B cell (primary cell): ENCODE measurements at regions of chr21 and their contacts with region 1.

Region 1: GRCh38 chr21:17819114-17819876 is at the start of gene C21orf91:
- DNase-seq: peak; percentile 95
- ATAC-seq: peak; percentile 84
- H3K4me3 ChIP-seq: peak within 1 kb of the TSS; percentile 84 to 93 (median 92)
- H3K4me3 Mint-ChIP-seq: peak within 1 kb of the TSS; percentile 99
- H3K27ac ChIP-seq: peak within 1 kb of the TSS; percentile 86 to 96
- H3K27ac Mint-ChIP-seq: peak within 1 kb of the TSS; percentile 100
- H3K4me1 ChIP-seq: peaks cover 24 to 26% of the 10 kb centered on the region in 2 donors
- H3K4me1 Mint-ChIP-seq: peaks cover 36% of the 10 kb centered on the region
- H3K27me3 ChIP-seq: no peaks in the 10 kb centered on the region
- H3K27me3 Mint-ChIP-seq: no peaks in the 10 kb centered on the region
- CTCF ChIP-seq: no peak
- total RNA-seq, gene C21orf91: 31.1 and 32.3 TPM in 2 replicates

Region 2: GRCh38 chr21:17611414-17612022 is 207.8 kb before region 1 on chr21:
- CTCF ChIA-PET with region 1: no interaction called
- POLR2A ChIA-PET with region 1: no interaction called
- intact Hi-C with region 1: loop called (anchors 1 kb)
- DNase-seq: peak; percentile 87
- ATAC-seq: peak; percentile 42
- H3K4me3 ChIP-seq: peak overlapping the region; percentile 75 to 89 (median 79)
- H3K4me3 Mint-ChIP-seq: peak overlapping the region; percentile 97
- H3K27ac ChIP-seq: peak overlapping the region; percentile 3 to 62
- H3K27ac Mint-ChIP-seq: peak overlapping the region; percentile 96
- H3K4me1 ChIP-seq: peaks cover 8 to 10% of the 10 kb centered on the region in 2 donors
- H3K4me1 Mint-ChIP-seq: peaks cover 18% of the 10 kb centered on the region
- H3K27me3 ChIP-seq: no peaks in the 10 kb centered on the region
- H3K27me3 Mint-ChIP-seq: no peaks in the 10 kb centered on the region
- CTCF ChIP-seq: no peak

Region 3: GRCh38 chr21:17679002-17679600 is 140.2 kb before region 1 on chr21:
- CTCF ChIA-PET with region 1: interaction called, 3 read pairs
- POLR2A ChIA-PET with region 1: no interaction called
- intact Hi-C with region 1: loop called (anchors 2 kb)
- DNase-seq: peak; percentile 71
- ATAC-seq: peak; percentile 78
- H3K4me3 ChIP-seq: no peak overlapping the region
- H3K4me3 Mint-ChIP-seq: no peak overlapping the region
- H3K27ac ChIP-seq: no peak overlapping the region
- H3K27ac Mint-ChIP-seq: no peak overlapping the region
- H3K4me1 ChIP-seq: no peaks in the 10 kb centered on the region
- H3K4me1 Mint-ChIP-seq: no peaks in the 10 kb centered on the region
- H3K27me3 ChIP-seq: no peaks in the 10 kb centered on the region
- H3K27me3 Mint-ChIP-seq: no peaks in the 10 kb centered on the region
- CTCF ChIP-seq: peak; percentile 92

Region 4: GRCh38 chr21:17688912-17689874 is 130.1 kb before region 1 on chr21:
- CTCF ChIA-PET with region 1: interaction called, 11 read pairs
- POLR2A ChIA-PET with region 1: no interaction called
- intact Hi-C with region 1: no loop called
- DNase-seq: peak; percentile 30
- ATAC-seq: no peak
- H3K4me3 ChIP-seq: no peak overlapping the region
- H3K4me3 Mint-ChIP-seq: no peak overlapping the region
- H3K27ac ChIP-seq: no peak overlapping the region
- H3K27ac Mint-ChIP-seq: no peak overlapping the region
- H3K4me1 ChIP-seq: peaks cover 2 to 3% of the 10 kb centered on the region in 2 donors
- H3K4me1 Mint-ChIP-seq: peaks cover 6% of the 10 kb centered on the region
- H3K27me3 ChIP-seq: peaks cover 0 to 3% (median 0%) of the 10 kb centered on the region in 4 experiments
- H3K27me3 Mint-ChIP-seq: peaks cover 6% of the 10 kb centered on the region
- CTCF ChIP-seq: peak; percentile 49

Region 5: GRCh38 chr21:17780539-17780938 is 38.8 kb before region 1 on chr21:
- CTCF ChIA-PET with region 1: interaction called, 8 read pairs
- POLR2A ChIA-PET with region 1: interaction called, 14 read pairs
- intact Hi-C with region 1: loop called (anchors 1 kb)
- DNase-seq: peak; percentile 66
- ATAC-seq: peak; percentile 26
- H3K4me3 ChIP-seq: peak overlapping the region in 1 of 5 experiments; percentile 3
- H3K4me3 Mint-ChIP-seq: peak overlapping the region; percentile 58
- H3K27ac ChIP-seq: no peak overlapping the region
- H3K27ac Mint-ChIP-seq: peak overlapping the region; percentile 66
- H3K4me1 ChIP-seq: peaks cover 59 to 63% of the 10 kb centered on the region in 2 donors
- H3K4me1 Mint-ChIP-seq: peaks cover 72% of the 10 kb centered on the region
- H3K27me3 ChIP-seq: peaks cover 0 to 5% (median 0%) of the 10 kb centered on the region in 4 experiments
- H3K27me3 Mint-ChIP-seq: no peaks in the 10 kb centered on the region
- CTCF ChIP-seq: no peak

Region 6: GRCh38 chr21:17793246-17794123 is 25.8 kb before region 1 on chr21:
- CTCF ChIA-PET with region 1: interaction called, 3 read pairs
- POLR2A ChIA-PET with region 1: no interaction called
- intact Hi-C with region 1: loop called (anchors 2 kb)
- DNase-seq: peak; percentile 52
- ATAC-seq: peak; percentile 64
- H3K4me3 ChIP-seq: peak overlapping the region in 4 of 5 experiments; percentile 9 to 60 (median 38)
- H3K4me3 Mint-ChIP-seq: peak overlapping the region; percentile 76
- H3K27ac ChIP-seq: peak overlapping the region; percentile 29 to 70
- H3K27ac Mint-ChIP-seq: peak overlapping the region; percentile 70
- H3K4me1 ChIP-seq: peaks cover 18 to 25% of the 10 kb centered on the region in 2 donors
- H3K4me1 Mint-ChIP-seq: peaks cover 47% of the 10 kb centered on the region
- H3K27me3 ChIP-seq: no peaks in the 10 kb centered on the region
- H3K27me3 Mint-ChIP-seq: no peaks in the 10 kb centered on the region
- CTCF ChIP-seq: no peak

Region 7: GRCh38 chr21:17841103-17841502 is 21.8 kb after region 1 on chr21:
- CTCF ChIA-PET with region 1: no interaction called
- POLR2A ChIA-PET with region 1: no interaction called
- intact Hi-C with region 1: no loop called
- DNase-seq: no peak
- ATAC-seq: no peak
- H3K4me3 ChIP-seq: no peak overlapping the region
- H3K4me3 Mint-ChIP-seq: no peak overlapping the region
- H3K27ac ChIP-seq: no peak overlapping the region
- H3K27ac Mint-ChIP-seq: no peak overlapping the region
- H3K4me1 ChIP-seq: no peaks in the 10 kb centered on the region
- H3K4me1 Mint-ChIP-seq: no peaks in the 10 kb centered on the region
- H3K27me3 ChIP-seq: no peaks in the 10 kb centered on the region
- H3K27me3 Mint-ChIP-seq: no peaks in the 10 kb centered on the region
- CTCF ChIP-seq: no peak

Region 8: GRCh38 chr21:17866590-17866989 is 47.3 kb after region 1 on chr21:
- CTCF ChIA-PET with region 1: no interaction called
- POLR2A ChIA-PET with region 1: no interaction called
- intact Hi-C with region 1: no loop called
- DNase-seq: no peak
- ATAC-seq: no peak
- H3K4me3 ChIP-seq: no peak overlapping the region
- H3K4me3 Mint-ChIP-seq: no peak overlapping the region
- H3K27ac ChIP-seq: no peak overlapping the region
- H3K27ac Mint-ChIP-seq: no peak overlapping the region
- H3K4me1 ChIP-seq: no peaks in the 10 kb centered on the region
- H3K4me1 Mint-ChIP-seq: no peaks in the 10 kb centered on the region
- H3K27me3 ChIP-seq: no peaks in the 10 kb centered on the region
- H3K27me3 Mint-ChIP-seq: peaks cover 4% of the 10 kb centered on the region
- CTCF ChIP-seq: no peak

Region 9: DNA sequence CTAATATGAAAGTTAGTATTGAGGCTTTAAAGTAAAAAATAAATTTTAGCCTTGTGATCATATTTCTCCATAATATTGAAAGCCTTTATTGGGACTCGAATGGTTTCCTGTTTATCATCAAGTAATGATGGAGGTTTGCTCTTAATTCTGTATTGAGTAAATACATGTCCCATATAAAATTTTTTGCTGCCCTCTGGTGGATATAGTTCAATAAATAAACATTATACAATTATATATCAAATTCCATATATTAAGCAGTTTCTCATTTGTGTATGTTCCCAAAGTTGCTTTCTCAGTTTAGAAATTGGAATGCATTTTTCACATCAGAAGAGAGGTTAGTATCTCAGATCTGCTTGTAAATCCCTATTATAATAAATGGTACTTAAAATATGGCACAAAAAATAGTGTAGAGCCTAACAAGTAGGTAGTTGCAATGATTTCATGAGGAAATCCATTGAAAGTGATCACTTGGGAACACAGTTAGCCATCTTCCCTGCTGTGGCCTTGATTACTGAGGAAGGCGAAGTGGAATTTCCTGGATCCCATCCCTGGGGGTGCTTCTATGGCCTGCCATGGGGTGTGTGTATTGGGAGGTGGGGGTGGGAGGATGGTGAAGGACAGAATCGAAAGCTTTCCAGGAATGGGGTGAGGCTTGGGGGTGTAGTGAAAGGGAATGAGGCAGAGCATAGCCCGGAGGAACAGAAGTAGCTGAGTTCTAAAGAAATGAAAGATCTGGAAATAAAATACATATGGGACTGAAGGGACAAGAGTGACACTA is 83.9 kb after region 1 on chr21:
- CTCF ChIA-PET with region 1: interaction called, 3 read pairs
- POLR2A ChIA-PET with region 1: no interaction called
- intact Hi-C with region 1: loop called (anchors 2 kb)
- DNase-seq: peak; percentile 57
- ATAC-seq: peak; percentile 24
- H3K4me3 ChIP-seq: no peak overlapping the region
- H3K4me3 Mint-ChIP-seq: no peak overlapping the region
- H3K27ac ChIP-seq: no peak overlapping the region
- H3K27ac Mint-ChIP-seq: no peak overlapping the region
- H3K4me1 ChIP-seq: peaks cover 0 to 6% of the 10 kb centered on the region in 2 donors
- H3K4me1 Mint-ChIP-seq: peaks cover 8% of the 10 kb centered on the region
- H3K27me3 ChIP-seq: no peaks in the 10 kb centered on the region
- H3K27me3 Mint-ChIP-seq: no peaks in the 10 kb centered on the region
- CTCF ChIP-seq: peak; percentile 72